ENCODE measurements at regions of chr9 and their contacts with region 1.

Region 1: DNA sequence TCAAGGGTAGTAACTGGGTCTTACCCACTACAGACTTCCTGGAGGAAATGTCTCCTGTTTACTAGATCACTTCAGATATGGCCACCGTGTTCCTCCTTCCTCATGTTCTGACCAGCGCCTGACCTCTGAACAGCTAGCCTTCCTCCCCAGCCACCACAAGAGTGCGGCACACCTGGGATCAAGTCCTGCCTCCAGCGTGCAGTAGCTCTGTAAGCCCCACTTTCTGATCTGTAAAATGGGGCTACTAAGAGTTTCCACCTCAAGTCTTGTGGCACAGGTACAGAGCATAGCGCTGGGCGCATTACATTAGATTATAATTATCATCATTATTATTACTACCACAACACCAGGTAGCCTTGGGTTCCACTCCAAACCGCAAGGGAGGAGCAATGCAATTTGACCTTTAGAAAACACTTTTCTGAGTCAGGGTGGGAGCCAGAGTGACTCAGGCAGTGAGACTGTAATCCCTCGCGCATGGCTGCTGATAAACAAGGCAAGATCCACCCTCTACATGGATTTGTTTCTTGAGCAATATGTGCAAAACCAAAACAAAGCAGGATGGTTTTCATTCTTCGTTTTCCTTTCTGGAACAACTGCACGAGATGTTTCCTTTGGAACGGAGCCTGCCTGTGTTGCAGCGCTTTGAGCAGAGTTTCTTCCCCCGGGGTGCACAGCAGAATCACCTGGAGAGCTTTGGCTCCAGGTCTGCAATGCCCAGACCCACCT is 65.0 kb upstream of the ANGPTL2 start:
- DNase-seq: peak; percentile 83
- H3K4me3 ChIP-seq: no peak overlapping the region
- H3K27ac ChIP-seq: peak overlapping the region; percentile 55 to 79
- H3K4me1 ChIP-seq: peaks cover 9% of the 10 kb centered on the region
- H3K27me3 ChIP-seq: no peaks in the 10 kb centered on the region
- CTCF ChIP-seq: no peak
- POLR2A ChIP-seq: no peak

Region 2: DNA sequence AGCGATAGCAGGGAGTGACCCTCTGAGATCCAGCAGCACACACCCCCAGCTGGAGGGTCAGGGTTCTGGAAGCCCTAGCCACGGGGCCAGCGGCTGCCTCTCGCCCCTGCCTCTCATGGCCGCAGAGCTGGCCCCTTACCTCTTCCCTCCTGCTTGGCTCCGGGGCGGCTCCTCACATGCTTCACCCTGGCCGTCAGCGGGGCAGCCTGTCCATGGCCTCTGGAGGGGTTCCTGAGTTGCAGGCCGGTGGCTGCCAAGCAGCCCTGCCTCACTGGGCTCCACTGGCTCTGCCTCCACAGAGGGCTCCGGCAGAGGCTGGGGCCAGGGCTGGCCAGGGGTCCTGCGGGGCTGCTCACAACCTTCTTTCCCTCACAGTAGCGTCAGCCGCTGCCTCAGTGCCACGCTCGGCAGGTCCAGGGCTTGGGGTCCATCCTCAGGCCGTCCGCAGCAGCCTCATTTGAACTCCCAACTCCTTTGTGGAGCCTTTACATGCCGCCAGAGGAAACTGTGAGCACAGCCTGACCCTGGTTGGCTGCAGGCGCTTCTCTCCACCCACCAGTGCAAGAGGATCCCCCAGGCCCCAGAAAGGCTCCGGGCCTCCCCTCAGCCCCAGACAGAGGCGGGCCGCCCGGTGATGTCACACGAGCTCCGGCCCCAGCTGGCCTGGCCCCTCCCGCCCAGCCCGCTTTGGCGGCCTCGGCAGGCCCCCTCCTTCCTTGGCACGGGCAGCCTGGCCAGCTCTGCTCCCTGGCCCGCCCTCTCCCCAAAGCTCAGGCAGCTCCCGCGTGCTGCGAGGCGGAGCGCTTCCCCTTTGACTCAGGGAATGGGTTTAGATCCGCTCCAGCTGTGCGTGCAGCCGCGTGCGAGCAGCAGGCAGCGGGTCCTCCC is 65.0 kb before region 1 on chr9 and contains the start of gene ANGPTL2:
- intact Hi-C with region 1: loop called (anchors 1 kb)
- DNase-seq: peak; percentile 88
- H3K4me3 ChIP-seq: peak within 1 kb of the TSS; percentile 39 to 41
- H3K27ac ChIP-seq: peak within 1 kb of the TSS; percentile 72 to 82
- H3K4me1 ChIP-seq: peaks cover 10% of the 10 kb centered on the region
- H3K27me3 ChIP-seq: no peaks in the 10 kb centered on the region
- CTCF ChIP-seq: peak in 1 of 4 experiments; percentile 11
- POLR2A ChIP-seq: peak; percentile 50
- total RNA-seq, gene ANGPTL2: 17.3 to 43.2 TPM

Region 3: GRCh38 chr9:127133739-127134167 is 53.6 kb before region 1 on chr9:
- intact Hi-C with region 1: loop called (anchors 2 kb)
- DNase-seq: peak; percentile 50
- H3K4me3 ChIP-seq: no peak overlapping the region
- H3K27ac ChIP-seq: peak overlapping the region; percentile 63 to 74
- H3K4me1 ChIP-seq: peaks cover 16% of the 10 kb centered on the region
- H3K27me3 ChIP-seq: no peaks in the 10 kb centered on the region
- CTCF ChIP-seq: no peak
- POLR2A ChIP-seq: no peak

Measured in prostate gland (tissue), 2 donors.